Activated CD4-positive, alpha-beta T cell treated with anti-CD3 and anti-CD28 coated beads, Interleukin-2, amount 10 ng/mL, durations not matched to agents 24 days and 14 days (primary cell): ENCODE measurements at regions of chr10 and their contacts with region 1.

Region 1: GRCh38 chr10:11197266-11197712 is 179.6 kb downstream of the CELF2 start:
- DNase-seq: no peak
- H3K4me3 Mint-ChIP-seq: no peak overlapping the region
- H3K27ac Mint-ChIP-seq: peak overlapping the region; percentile 73
- H3K4me1 Mint-ChIP-seq: peaks cover 85% of the 10 kb centered on the region
- H3K27me3 Mint-ChIP-seq: no peaks in the 10 kb centered on the region

Region 2: DNA sequence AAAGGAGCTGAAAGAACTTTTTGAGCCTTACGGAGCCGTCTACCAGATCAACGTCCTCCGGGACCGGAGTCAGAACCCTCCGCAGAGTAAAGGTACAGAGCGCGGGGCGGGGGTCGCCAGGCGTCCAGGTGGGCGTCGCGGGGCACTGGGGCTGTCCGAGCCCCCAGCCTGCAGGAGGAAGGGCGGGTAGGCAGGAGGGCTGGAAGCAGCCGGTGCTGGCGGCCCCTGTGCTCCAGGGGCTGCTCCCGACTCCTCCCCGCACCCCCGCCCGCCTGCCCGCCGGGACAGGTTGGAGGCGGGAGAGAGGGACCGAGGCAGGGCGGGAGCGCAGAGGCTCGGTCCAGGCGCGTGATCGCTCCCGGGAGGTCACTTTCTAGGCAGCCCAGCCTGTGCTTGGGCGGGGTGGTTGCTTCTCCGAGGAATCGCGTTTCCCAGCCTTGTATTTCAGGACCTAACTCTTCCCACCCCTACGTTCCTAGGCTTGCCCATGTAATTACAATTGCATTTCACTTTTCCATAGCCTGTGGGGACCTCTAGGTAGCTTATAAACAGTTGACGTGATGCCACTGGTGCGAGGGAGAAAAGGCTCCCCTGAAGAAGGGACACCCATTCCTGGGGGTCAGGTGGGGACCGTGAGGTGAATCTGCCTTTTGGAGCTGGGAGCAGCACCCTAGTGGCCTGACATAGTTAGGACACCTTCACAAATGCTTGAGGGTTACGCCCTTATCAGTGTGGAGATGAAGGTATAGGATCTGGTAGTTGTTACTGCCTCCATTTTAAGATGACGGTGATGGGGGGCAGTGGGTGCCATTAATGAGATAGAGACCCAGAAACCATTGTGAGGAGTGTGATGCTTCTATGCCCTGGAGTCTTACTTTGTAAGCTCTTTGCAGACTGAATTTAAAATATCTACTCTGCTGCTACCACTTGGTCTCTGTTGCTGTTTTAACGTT is 31.4 kb before region 1 on chr10:
- intact Hi-C with region 1: no loop called
- DNase-seq: peak; percentile 92
- H3K4me3 Mint-ChIP-seq: no peak overlapping the region
- H3K27ac Mint-ChIP-seq: peak overlapping the region; percentile 96
- H3K4me1 Mint-ChIP-seq: peaks cover 40% of the 10 kb centered on the region
- H3K27me3 Mint-ChIP-seq: no peaks in the 10 kb centered on the region

Region 3: DNA sequence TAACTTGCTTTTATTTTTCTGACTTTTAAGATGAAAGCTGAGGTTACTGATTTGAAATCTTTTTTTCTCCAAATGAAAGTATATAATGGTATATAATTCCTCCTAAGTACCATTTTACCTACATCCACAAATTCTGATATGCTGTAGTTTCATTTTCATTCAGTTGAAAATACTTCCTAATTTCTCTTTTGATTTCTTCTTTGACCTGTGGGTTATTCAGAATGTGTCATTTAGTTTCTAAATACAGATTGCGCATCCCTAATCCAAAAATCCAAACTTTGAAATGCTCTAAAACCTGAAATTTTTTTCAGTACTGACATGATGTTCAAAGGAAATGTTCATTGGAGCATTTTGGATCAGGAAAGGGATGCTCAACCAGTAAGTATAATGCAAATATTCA is 10.9 kb before region 1 on chr10:
- intact Hi-C with region 1: loop called (anchors 1 kb)
- DNase-seq: no peak
- H3K4me3 Mint-ChIP-seq: peak overlapping the region; percentile 24
- H3K27ac Mint-ChIP-seq: peak overlapping the region; percentile 18
- H3K4me1 Mint-ChIP-seq: peaks cover 82% of the 10 kb centered on the region
- H3K27me3 Mint-ChIP-seq: no peaks in the 10 kb centered on the region

Region 4: DNA sequence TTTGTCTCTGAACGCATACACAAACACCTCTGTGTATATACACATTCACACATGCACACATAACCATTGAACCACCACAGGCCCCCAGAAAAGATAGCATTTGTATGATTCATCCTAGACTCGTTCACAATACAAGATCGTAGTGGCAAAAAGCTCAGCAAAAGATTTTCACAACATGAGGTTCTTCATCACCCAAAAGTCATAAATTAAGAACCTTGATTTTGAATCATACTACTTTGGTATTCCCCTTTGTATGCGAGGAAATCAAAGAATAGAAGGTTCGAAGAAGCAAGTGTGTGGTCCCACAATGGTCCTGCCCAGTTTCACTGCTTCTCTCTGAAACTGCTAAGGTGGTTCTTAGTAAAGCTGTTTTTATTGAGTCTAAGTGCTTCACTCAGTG is 21.1 kb after region 1 on chr10:
- intact Hi-C with region 1: loop called (anchors 2 kb)
- DNase-seq: no peak
- H3K4me3 Mint-ChIP-seq: peak overlapping the region; percentile 10
- H3K27ac Mint-ChIP-seq: peak overlapping the region; percentile 81
- H3K4me1 Mint-ChIP-seq: peaks cover 59% of the 10 kb centered on the region
- H3K27me3 Mint-ChIP-seq: no peaks in the 10 kb centered on the region